ENCODE measurements at regions of chr7 and their contacts with region 1.

Region 1: GRCh38 chr7:18570890-18571478 is 75.4 kb downstream of the HDAC9 start:
- DNase-seq: no peak
- ATAC-seq: no peak
- H3K4me3 Mint-ChIP-seq: no peak overlapping the region
- H3K27ac Mint-ChIP-seq: no peak overlapping the region
- H3K4me1 Mint-ChIP-seq: no peaks in the 10 kb centered on the region
- H3K27me3 Mint-ChIP-seq: no peaks in the 10 kb centered on the region

Region 2: GRCh38 chr7:18552943-18553584 is 17.9 kb before region 1 on chr7:
- CTCF ChIA-PET with region 1: interaction called, 3 read pairs
- POLR2A ChIA-PET with region 1: interaction called, 10 read pairs
- intact Hi-C with region 1: no loop called
- DNase-seq: no peak
- ATAC-seq: no peak
- H3K4me3 Mint-ChIP-seq: no peak overlapping the region
- H3K27ac Mint-ChIP-seq: no peak overlapping the region
- H3K4me1 Mint-ChIP-seq: no peaks in the 10 kb centered on the region
- H3K27me3 Mint-ChIP-seq: no peaks in the 10 kb centered on the region

Measured in activated CD4-positive, alpha-beta T cell treated with anti-CD3 and anti-CD28 coated beads for 36 hours (primary cell).